BJ (cell line): ENCODE measurements at regions of chr1 and their contacts with region 1.

Region 1: DNA sequence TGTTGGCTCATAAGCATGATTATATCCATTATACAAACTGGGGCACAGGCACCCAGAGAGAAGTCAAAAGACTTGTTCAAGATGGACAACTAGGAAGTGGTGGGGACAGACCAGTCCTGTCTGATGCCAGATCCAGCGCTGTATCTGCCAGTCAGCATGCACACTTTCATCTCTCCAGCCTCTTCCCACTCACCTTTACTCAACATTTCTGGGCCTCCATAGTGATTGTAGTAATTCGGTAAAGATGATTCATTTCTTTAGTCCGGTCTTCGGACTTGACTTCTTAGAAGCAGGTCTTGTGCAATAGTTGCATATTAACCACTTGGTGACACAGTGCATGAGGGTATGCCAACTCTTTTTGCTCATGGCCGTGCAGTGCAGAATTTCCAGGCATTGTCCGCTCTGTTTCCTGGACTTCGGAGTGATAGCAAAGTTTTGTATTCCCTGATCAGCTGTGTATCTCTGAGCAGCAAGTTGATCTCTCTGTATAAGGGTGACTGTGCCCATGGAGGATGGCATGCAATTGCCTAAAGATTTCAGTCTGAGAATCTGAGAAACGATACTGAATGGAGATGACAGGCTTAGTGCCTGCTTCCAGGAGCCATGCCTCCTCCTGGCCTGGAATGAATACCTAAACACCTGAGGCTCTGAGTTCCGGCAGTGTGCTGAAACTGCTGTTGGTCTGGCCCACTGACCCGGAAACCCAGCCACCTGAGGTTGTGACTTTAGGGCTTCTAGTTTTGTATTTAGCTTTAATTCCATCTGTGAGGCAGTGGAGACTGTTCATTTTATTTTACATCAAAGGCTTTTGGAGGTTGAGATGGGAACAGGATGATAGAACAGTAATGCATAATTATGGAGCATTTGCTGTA is 39.0 kb downstream of the GALNT2 start:
- DNase-seq: no peak
- H3K4me3 ChIP-seq: no peak overlapping the region
- H3K27me3 ChIP-seq: no peaks in the 10 kb centered on the region
- CTCF ChIP-seq: no peak

Region 2: DNA sequence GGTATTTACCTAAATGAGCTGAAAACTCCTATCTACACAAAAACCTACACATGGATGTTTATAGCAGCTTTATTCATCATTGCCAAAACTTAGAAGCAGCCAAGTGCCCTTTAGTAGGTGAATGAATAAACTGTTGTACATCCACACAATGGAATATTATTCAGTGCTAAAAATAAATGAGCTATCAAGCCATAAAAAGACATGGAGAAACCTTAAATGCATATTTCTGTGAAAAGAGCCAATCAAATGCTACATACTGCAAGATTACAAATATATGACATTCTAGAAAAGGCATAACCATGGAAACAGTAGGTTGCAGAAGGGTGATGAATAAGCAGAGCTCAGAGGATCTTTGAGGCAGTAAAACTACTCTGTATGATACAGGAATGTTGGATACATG is 570.8 kb before region 1 on chr1:
- CTCF ChIA-PET with region 1: no interaction called
- POLR2A ChIA-PET with region 1: interaction called, 11 read pairs
- DNase-seq: no peak
- H3K4me3 ChIP-seq: no peak overlapping the region
- H3K27me3 ChIP-seq: no peaks in the 10 kb centered on the region
- CTCF ChIP-seq: no peak

Region 3: DNA sequence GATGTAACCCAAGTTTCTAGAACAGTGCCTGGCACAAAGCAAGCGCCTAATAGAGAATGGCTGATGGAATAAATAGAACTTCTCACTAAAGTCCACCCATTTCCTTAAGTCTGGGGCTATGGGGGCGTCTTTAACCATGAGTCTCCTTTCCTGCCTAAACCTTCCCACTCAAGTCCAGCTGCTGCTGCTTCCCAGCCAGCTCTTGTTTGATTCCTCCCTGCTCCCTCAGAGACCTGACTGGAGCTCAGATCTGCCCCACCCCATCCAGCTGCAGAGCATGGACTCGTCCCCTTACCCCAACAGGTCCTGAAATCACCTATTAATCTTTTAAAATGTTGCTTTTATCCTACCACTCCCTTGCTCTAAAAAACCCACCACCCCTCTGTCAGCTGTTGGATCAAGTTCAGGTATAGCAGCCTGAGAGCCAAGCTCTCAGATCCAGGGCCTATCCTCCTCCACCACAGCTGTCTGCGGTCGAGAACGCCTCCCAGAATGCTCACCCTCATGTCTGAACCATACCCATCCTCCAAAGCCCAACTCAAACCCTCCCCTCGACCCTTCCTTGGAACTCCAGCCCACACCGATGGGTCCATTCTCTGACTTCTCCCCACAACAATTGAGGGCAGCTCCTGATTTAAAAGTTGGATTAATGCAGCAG is 51.8 kb before region 1 on chr1:
- CTCF ChIA-PET with region 1: no interaction called
- POLR2A ChIA-PET with region 1: no interaction called
- DNase-seq: no peak
- H3K4me3 ChIP-seq: no peak overlapping the region
- H3K27me3 ChIP-seq: peaks cover 10% of the 10 kb centered on the region
- CTCF ChIP-seq: no peak